ENCODE measurements at regions of chr13 and their contacts with region 1.

Region 1: GRCh38 chr13:30617315-30618185 is at the start of gene USPL1:
- DNase-seq: peak; percentile 99
- ATAC-seq: peak; percentile 92
- H3K4me3 Mint-ChIP-seq: no peak within 1 kb of the TSS
- H3K27ac Mint-ChIP-seq: no peak within 1 kb of the TSS
- H3K4me1 Mint-ChIP-seq: peaks cover 31% of the 10 kb centered on the region
- H3K27me3 Mint-ChIP-seq: no peaks in the 10 kb centered on the region
- total RNA-seq, gene USPL1: 14.8 to 16.9 TPM

Region 2: DNA sequence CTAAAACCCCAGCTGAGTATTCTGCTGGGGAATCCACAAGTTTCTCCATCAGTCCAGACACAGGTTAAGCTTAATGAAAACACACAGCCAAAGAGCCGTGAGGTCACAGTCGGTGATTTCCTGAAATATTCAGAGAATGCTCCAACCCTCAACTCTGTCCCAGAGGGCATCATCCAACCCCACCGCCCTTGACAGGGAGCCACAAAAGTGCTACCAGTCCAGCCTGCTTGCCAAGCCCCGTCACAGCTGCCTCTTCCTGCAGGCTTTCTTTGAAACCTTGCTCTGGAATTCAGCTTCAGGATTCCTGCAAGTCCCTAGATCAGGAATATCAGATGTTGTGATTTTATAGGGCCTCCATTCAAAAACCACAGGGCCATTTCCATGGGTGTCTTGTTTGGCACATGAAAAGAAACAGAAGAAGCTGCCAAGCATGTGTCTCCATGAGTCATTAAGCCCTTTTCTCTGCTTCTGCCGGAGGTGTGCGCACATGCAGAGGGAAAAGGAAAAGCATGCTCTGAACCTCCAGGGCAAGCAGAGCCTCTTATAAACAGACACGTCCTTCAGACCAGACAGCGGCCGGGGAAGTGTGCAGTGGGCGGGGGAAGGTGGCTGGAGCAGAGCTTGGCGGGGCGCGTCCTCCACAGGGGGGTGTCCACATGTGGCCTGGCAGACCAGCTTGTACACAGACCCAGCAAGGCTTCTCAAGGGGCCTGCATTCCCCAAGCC is 474.9 kb before region 1 on chr13:
- CTCF ChIA-PET with region 1: interaction called, 3 read pairs
- POLR2A ChIA-PET with region 1: interaction called, 3 read pairs
- intact Hi-C with region 1: loop called in 1 of 2 experiments (anchors 5 kb)
- DNase-seq: peak; percentile 66
- ATAC-seq: peak; percentile 49
- H3K4me3 Mint-ChIP-seq: no peak overlapping the region
- H3K27ac Mint-ChIP-seq: peak overlapping the region; percentile 84
- H3K4me1 Mint-ChIP-seq: peaks cover 62% of the 10 kb centered on the region
- H3K27me3 Mint-ChIP-seq: no peaks in the 10 kb centered on the region

Region 3: DNA sequence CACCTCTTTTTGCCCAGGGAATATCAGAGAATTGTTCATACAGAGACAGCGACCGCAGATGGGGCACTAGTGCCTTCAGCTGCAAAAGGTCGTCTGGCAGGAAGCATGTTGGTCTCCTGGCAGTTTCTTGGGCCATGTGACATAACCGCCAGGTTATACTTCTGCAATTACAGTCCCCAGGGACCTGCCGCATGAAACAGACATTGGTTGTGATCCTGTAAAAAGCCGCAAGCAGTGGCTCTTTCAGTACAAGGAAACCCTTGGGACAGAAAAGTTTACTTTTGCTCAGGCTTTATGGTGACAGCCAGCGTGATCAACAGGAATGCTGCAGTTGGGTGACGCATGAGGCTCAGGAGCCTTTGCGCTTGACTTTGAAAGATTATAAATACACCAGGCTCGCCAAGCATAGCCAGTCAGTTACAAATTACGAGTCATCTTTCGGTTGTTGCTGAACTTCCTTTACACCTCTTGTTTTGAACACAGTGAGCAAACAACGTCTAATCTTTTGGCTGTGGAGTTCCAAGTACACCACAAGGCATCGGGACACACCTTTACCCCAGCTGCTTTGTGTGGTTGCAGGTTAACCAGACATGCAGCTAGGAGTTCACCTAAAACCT is 245.8 kb before region 1 on chr13:
- CTCF ChIA-PET with region 1: no interaction called
- POLR2A ChIA-PET with region 1: no interaction called
- intact Hi-C with region 1: loop called (anchors 2 to 5 kb)
- DNase-seq: peak; percentile 81
- ATAC-seq: peak; percentile 67
- H3K4me3 Mint-ChIP-seq: peak overlapping the region; percentile 59
- H3K27ac Mint-ChIP-seq: peak overlapping the region; percentile 69
- H3K4me1 Mint-ChIP-seq: peaks cover 75% of the 10 kb centered on the region
- H3K27me3 Mint-ChIP-seq: no peaks in the 10 kb centered on the region

Region 4: DNA sequence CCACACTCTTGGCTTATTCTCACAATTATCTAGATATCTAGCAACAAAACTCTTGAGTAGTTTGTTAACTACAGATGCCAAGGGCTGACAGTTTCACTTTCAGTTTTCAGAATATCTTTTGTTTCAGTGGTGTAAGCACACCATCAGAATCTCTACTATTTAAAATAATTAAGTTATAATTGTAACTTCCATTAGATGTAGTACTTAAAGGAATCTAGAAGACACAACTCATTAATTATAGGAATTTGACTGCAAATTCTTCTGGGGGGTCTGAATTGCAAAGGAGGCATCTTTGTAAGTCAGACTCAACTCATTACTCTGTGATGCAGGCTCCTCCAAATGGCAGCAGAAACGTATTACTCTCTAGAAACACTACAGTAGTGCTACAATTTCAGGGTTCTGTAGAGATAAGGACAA is 44.7 kb before region 1 on chr13:
- CTCF ChIA-PET with region 1: no interaction called
- POLR2A ChIA-PET with region 1: interaction called, 4 read pairs
- intact Hi-C with region 1: loop called (anchors 2 kb)
- DNase-seq: peak; percentile 27
- ATAC-seq: peak; percentile 54
- H3K4me3 Mint-ChIP-seq: peak overlapping the region; percentile 55
- H3K27ac Mint-ChIP-seq: peak overlapping the region; percentile 72
- H3K4me1 Mint-ChIP-seq: peaks cover 40% of the 10 kb centered on the region
- H3K27me3 Mint-ChIP-seq: no peaks in the 10 kb centered on the region

Region 5: DNA sequence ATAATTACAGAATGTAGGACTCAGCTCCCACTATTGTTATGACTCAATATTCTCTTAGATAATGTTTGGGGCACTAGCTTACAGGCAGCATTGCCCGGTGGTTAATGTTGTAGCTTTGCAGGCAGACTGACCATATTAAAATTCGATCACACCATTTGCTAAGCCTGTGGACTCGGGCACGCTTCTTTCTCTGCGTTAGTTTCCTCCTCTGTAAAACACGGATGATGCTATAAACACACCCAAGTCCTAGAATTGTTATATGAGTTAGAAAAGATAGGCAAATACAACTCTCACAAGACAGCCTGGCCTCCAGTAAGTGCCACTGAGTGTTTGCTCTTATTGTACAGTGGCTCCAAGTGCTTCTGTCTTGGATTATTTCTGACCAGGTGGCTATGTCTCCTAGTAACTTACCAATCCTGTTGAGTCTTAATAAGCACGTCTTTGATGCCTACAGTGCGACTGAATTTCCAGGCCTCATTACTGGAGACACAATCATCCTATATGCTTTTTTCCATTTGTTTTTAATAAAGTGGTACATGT is 67.8 kb after region 1 on chr13:
- CTCF ChIA-PET with region 1: no interaction called
- POLR2A ChIA-PET with region 1: no interaction called
- intact Hi-C with region 1: no loop called
- DNase-seq: no peak
- ATAC-seq: no peak
- H3K4me3 Mint-ChIP-seq: no peak overlapping the region
- H3K27ac Mint-ChIP-seq: no peak overlapping the region
- H3K4me1 Mint-ChIP-seq: peaks cover 5% of the 10 kb centered on the region
- H3K27me3 Mint-ChIP-seq: peaks cover 2% of the 10 kb centered on the region

Region 6: GRCh38 chr13:30802953-30803478 is 185.5 kb after region 1 on chr13:
- CTCF ChIA-PET with region 1: interaction called, 8 read pairs
- POLR2A ChIA-PET with region 1: no interaction called
- intact Hi-C with region 1: loop called in 1 of 2 experiments (anchors 1 kb)
- DNase-seq: peak; percentile 91
- ATAC-seq: peak; percentile 99
- H3K4me3 Mint-ChIP-seq: no peak overlapping the region
- H3K27ac Mint-ChIP-seq: no peak overlapping the region
- H3K4me1 Mint-ChIP-seq: peaks cover 4% of the 10 kb centered on the region
- H3K27me3 Mint-ChIP-seq: no peaks in the 10 kb centered on the region